A673 (cell line): ENCODE measurements at regions of chr16 and their contacts with region 1.

Region 1: DNA sequence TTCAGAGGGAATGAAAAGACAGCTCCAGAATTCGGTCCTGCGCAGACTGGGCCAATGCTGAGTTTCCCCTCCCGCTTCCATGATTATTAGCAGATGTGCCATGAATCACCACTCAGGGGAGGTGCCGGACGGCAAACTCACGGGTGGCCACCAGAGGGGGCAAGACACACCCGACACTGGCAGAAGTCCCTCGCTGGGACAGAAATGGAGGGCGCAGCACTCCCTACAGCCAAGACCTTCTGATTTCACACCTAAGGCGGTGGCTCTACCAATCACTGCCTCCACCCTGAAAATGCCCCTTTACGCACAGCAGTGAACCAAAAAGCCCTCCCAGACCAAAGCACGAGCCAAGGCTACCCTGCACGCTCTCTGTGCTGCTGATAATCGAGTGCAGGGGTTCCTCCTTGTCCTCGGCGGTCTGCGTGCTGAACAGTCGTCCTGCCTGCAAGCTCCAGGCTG is 26.8 kb downstream of the TRAP1 start:
- DNase-seq: peak; percentile 95
- H3K4me3 ChIP-seq: no peak overlapping the region
- H3K27ac ChIP-seq: peak overlapping the region; percentile 21
- H3K4me1 ChIP-seq: peaks cover 12% of the 10 kb centered on the region
- H3K27me3 ChIP-seq: no peaks in the 10 kb centered on the region
- CTCF ChIP-seq: peak; percentile 98

Region 2: GRCh38 chr16:3793161-3793576 is 102.7 kb after region 1 on chr16:
- CTCF ChIA-PET with region 1: no interaction called
- POLR2A ChIA-PET with region 1: no interaction called
- intact Hi-C with region 1: no loop called
- DNase-seq: no peak
- H3K4me3 ChIP-seq: no peak overlapping the region
- H3K27ac ChIP-seq: no peak overlapping the region
- H3K4me1 ChIP-seq: no peaks in the 10 kb centered on the region
- H3K27me3 ChIP-seq: no peaks in the 10 kb centered on the region
- CTCF ChIP-seq: no peak

Region 3: DNA sequence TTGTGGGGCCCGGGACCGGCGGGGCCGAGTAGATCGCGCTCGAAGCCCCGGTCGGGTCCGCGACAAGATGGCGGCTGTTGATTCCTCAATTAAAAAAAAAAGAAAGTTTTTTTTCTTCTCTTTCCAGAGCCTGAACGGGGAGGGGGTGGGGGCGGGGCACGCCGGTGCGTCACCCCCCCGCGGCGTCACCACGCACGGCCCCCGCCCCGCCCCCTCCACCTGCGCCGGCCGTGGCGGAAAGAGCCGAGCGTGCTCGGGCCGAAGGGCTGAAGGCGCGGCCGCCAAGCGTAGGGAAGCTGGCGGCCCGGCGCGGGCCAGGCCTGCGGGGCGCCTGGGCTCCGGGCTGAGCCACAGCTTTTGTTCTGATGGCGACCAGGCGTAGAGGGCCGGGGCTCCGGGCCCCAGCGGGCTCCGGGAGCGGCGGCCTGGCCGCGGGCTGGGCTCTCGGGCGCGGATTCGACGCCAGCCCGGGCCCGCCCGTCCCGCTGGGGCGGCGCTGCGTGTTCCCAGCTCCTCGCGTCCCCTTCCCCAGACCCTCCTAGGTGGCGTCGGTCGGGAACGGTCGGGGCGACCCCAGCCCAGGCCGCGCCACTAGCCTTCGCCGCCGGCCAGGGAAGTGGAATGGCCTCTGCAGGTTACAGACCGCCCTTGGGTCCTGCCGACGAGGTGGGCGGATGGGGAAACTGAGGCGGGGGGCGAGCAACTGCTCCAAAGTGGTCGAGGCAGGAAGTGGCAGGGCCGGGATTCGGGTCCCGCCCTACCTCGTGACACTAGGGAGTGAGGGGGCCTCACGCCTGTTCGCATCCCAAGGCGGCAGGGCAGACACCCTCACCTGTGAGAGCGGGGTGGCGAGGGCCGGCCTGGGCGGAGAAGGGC is 190.4 kb after region 1 on chr16 and contains the start of gene CREBBP:
- CTCF ChIA-PET with region 1: interaction called, 3 read pairs
- POLR2A ChIA-PET with region 1: interaction called, 17 read pairs
- intact Hi-C with region 1: loop called (anchors 10 kb)
- DNase-seq: peak; percentile 94
- H3K4me3 ChIP-seq: peak within 1 kb of the TSS; percentile 94
- H3K27ac ChIP-seq: peak within 1 kb of the TSS; percentile 92
- H3K4me1 ChIP-seq: peaks cover 38% of the 10 kb centered on the region
- H3K27me3 ChIP-seq: no peaks in the 10 kb centered on the region
- CTCF ChIP-seq: no peak
- total RNA-seq, gene CREBBP: 76.1 and 79.6 TPM in 2 replicates

Region 4: DNA sequence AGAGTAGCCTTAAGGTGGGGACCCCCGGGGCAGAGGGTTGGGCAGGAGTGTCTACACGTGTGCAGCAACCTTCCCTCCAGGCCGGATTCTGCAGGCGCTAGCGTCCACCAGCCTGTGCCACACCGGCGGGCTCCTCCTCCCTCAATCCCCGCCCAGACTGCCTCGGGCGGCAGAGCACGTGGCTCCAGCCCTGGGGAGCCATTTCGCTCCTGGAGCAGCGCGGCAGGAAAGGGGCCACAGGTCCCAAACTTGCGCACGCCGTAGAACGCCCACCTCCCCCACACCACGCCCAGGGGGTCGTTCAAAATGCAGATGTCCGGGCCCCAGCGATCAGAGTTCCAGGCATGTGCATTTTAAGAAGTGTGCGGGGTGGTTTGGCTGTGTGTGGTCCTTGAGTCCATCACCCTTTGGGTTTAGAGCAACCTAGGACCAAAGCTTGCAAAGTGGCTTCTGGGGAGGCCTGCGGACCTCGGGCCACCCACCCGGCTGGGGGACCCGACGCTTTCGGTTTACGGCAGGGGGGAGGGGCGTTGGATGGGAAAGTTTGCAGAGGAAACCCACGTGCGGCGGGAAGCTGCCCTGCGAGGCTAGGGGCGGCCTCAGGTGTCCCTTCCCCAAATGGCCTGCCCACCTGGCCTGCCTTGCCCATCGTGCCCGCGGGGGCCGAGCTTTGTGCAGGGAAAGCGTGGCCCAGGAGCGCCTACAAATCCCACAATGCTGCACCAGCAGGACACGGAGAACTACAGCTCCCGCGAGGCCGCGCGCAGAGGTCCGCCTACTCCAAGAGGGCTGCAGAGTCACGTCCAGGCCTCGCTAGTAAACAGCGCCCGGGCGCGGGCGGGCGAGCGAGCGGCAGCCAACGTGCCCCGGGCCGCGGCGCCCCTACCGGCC is 580.9 kb after region 1 on chr16:
- CTCF ChIA-PET with region 1: interaction called, 18 read pairs
- POLR2A ChIA-PET with region 1: no interaction called
- intact Hi-C with region 1: no loop called
- DNase-seq: peak; percentile 96
- H3K4me3 ChIP-seq: peak overlapping the region; percentile 87
- H3K27ac ChIP-seq: peak overlapping the region; percentile 91
- H3K4me1 ChIP-seq: peaks cover 20% of the 10 kb centered on the region
- H3K27me3 ChIP-seq: no peaks in the 10 kb centered on the region
- CTCF ChIP-seq: no peak